ENCODE measurements at regions of chr1 and their contacts with region 1.

Region 1: GRCh38 chr1:72186733-72187307 is 95.5 kb downstream of the NEGR1 start:
- H3K4me3 Mint-ChIP-seq: no peak overlapping the region
- H3K27ac Mint-ChIP-seq: no peak overlapping the region
- H3K4me1 Mint-ChIP-seq: no peaks in the 10 kb centered on the region
- H3K27me3 Mint-ChIP-seq: no peaks in the 10 kb centered on the region

Region 2: GRCh38 chr1:72288886-72289285 is 102.1 kb after region 1 on chr1:
- intact Hi-C with region 1: no loop called
- H3K4me3 Mint-ChIP-seq: no peak overlapping the region
- H3K27ac Mint-ChIP-seq: peak overlapping the region; percentile 42
- H3K4me1 Mint-ChIP-seq: no peaks in the 10 kb centered on the region
- H3K27me3 Mint-ChIP-seq: no peaks in the 10 kb centered on the region

Region 3: DNA sequence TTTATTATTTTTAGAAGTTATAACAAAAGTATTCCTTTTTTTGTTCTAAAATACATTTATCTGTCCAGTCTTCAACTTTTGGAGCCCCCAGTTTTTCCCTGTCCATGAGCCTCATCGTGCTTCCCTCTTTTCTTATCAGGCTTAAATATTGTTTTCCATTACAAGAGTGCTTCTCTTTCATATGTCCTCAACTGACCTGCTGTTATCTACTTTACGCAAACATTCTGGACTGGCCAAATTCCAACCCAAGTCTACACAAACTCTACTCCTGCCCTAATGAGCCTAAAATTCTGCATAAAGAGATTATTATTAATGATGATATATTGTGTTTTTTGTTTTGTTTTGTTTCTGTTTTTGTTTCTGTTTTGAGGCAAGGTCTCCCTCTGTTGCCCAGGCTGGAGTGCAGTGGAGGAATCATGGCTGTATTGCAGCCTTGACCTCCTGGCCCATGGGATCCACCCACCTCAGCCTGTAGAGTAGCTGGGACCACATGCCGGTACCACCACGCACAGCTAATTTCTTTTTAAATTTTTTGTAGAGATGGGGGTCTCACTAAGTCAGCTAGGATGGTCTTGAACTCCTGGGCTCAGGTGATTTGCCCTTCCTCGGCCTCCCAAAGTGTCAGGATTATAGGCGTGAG is 414.3 kb after region 1 on chr1:
- intact Hi-C with region 1: loop called (anchors 10 kb)
- H3K4me3 Mint-ChIP-seq: no peak overlapping the region
- H3K27ac Mint-ChIP-seq: no peak overlapping the region
- H3K4me1 Mint-ChIP-seq: no peaks in the 10 kb centered on the region
- H3K27me3 Mint-ChIP-seq: no peaks in the 10 kb centered on the region

Measured in dendritic cell treated with granulocyte-macrophage colony-stimulating factor and Interleukin-4, amounts not matched to agents 40 ng/mL and 50 ng/mL, for 4 days (primary cell).